ENCODE measurements at regions of chr6 and their contacts with region 1.

Region 1: GRCh38 chr6:137799950-137800568 is 67.0 kb upstream of the TNFAIP3 start:
- H3K4me3 ChIP-seq: no peak overlapping the region
- H3K27ac ChIP-seq: no peak overlapping the region
- H3K4me1 ChIP-seq: no peaks in the 10 kb centered on the region
- CTCF ChIP-seq: no peak

Region 2: GRCh38 chr6:137136065-137136464 is 664.0 kb before region 1 on chr6:
- CTCF ChIA-PET with region 1: no interaction called
- POLR2A ChIA-PET with region 1: no interaction called
- H3K4me3 ChIP-seq: no peak overlapping the region
- H3K27ac ChIP-seq: no peak overlapping the region
- H3K4me1 ChIP-seq: no peaks in the 10 kb centered on the region
- CTCF ChIP-seq: no peak

Region 3: GRCh38 chr6:137783710-137784109 is 16.3 kb before region 1 on chr6:
- CTCF ChIA-PET with region 1: interaction called, 15 read pairs
- POLR2A ChIA-PET with region 1: no interaction called
- H3K4me3 ChIP-seq: no peak overlapping the region
- H3K27ac ChIP-seq: no peak overlapping the region
- H3K4me1 ChIP-seq: no peaks in the 10 kb centered on the region
- CTCF ChIP-seq: no peak

Region 4: DNA sequence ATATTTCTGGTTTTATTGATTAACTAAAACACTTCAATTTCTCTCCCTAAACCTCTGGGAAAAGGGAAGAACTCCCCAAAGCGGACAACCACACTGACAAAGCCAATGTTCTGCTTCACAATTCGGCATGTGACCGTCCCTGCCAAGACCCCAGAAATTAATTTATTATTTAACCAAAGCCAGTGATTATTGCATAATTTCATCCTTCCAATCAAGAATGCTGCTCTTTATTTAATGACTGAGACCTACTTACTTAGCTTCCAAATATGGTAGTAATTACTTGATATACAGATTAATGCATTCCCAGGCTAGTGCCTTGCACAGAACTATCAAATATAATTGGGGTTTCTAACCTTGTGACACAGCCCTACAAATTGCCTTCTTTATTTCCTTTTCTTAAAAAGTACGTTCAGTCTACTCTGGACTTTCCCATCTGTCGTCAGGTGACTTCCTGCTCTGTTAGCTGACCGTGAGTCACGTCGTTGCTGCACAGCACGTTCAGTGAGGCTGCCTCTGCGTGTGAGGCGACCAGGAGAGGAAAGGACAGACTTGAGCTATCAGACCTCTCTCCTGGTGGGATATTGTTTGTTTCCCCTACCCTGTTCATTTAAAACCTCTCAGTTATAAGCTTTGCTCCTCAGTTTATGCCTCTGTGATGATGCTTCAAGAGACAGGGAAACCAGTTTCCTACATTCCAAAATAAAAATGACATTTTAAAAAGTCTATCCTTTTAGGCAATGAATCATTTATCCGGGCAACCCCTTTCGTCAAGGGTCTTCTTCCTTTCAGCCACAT is 11.3 kb after region 1 on chr6:
- CTCF ChIA-PET with region 1: interaction called, 17 read pairs
- POLR2A ChIA-PET with region 1: interaction called, 9 read pairs
- H3K4me3 ChIP-seq: no peak overlapping the region
- H3K27ac ChIP-seq: no peak overlapping the region
- H3K4me1 ChIP-seq: peaks cover 5% of the 10 kb centered on the region; the same call in 1 of the 2 replicates
- CTCF ChIP-seq: no peak

Region 5: DNA sequence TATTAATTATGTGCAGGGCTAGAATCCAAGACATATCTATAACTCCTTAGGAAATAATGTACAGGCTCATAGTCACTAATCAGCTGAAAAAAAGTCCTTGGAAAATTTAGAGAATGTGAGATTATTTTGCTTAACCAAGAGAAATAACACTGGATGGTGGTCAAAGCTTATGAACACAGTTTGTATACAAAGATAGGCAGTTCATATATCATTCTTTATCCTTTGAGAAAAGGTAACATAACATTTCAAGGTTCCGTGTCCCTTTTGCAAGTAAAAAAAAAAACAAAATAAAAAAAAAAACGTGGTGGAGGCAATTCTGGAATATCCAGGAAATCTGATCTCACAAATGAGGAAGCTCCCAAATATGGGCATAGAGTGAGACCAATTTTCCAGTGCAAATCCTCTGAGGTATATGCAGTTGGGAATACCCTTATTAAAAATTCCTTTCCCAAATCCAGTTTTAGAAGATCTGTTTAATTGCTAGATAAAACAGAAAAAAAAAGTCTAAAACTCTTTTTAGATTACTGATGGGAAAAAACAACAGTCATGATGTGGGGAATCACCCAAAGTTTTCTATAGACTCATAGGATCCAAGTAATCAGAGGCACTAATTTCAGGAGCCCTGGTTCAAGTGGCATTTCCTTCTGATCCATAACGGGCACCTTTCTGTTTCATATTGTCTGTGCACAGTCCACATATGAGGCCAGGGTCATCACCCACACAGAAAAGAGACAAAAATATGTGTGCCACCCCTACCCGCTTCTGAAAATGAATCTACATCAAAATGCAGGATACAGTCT is 49.3 kb after region 1 on chr6:
- CTCF ChIA-PET with region 1: no interaction called
- POLR2A ChIA-PET with region 1: no interaction called
- H3K4me3 ChIP-seq: no peak overlapping the region
- H3K27ac ChIP-seq: no peak overlapping the region
- H3K4me1 ChIP-seq: peaks cover 11% of the 10 kb centered on the region; the same call in 1 of the 2 replicates
- CTCF ChIP-seq: no peak

Region 6: GRCh38 chr6:137866914-137867684 is 67.0 kb after region 1 on chr6 and contains the start of gene TNFAIP3:
- CTCF ChIA-PET with region 1: interaction called, 15 read pairs
- POLR2A ChIA-PET with region 1: no interaction called
- H3K4me3 ChIP-seq: peak within 1 kb of the TSS; percentile 67
- H3K27ac ChIP-seq: peak within 1 kb of the TSS; percentile 60; the same call in 1 of the 2 replicates
- H3K4me1 ChIP-seq: peaks cover 16% of the 10 kb centered on the region
- CTCF ChIP-seq: peak; percentile 68

Region 7: GRCh38 chr6:137951064-137951597 is 151.1 kb after region 1 on chr6:
- CTCF ChIA-PET with region 1: interaction called, 30 read pairs
- POLR2A ChIA-PET with region 1: interaction called, 5 read pairs
- H3K4me3 ChIP-seq: no peak overlapping the region
- H3K27ac ChIP-seq: no peak overlapping the region
- H3K4me1 ChIP-seq: no peaks in the 10 kb centered on the region
- CTCF ChIP-seq: no peak

Measured in HEK293 (cell line).